Activated CD4-positive, alpha-beta T cell treated with anti-CD3 and anti-CD28 coated beads, Interleukin-2, amount 10 ng/mL, durations not matched to agents 24 days and 14 days (primary cell): ENCODE measurements at regions of chr11 and their contacts with region 1.

Region 1: GRCh38 chr11:64778508-64779346 is at the start of gene SF1:
- DNase-seq: peak; percentile 100
- H3K4me3 Mint-ChIP-seq: peak within 1 kb of the TSS; percentile 94
- H3K27ac Mint-ChIP-seq: peak within 1 kb of the TSS; percentile 98
- H3K4me1 Mint-ChIP-seq: peaks cover 49% of the 10 kb centered on the region
- H3K27me3 Mint-ChIP-seq: no peaks in the 10 kb centered on the region
- total RNA-seq, gene SF1: 522 and 525 TPM in 2 replicates

Region 2: GRCh38 chr11:64742889-64743590 is 35.7 kb before region 1 on chr11:
- intact Hi-C with region 1: loop called (anchors 2 kb)
- DNase-seq: peak; percentile 95
- H3K4me3 Mint-ChIP-seq: peak overlapping the region; percentile 94
- H3K27ac Mint-ChIP-seq: no peak overlapping the region
- H3K4me1 Mint-ChIP-seq: peaks cover 30% of the 10 kb centered on the region
- H3K27me3 Mint-ChIP-seq: no peaks in the 10 kb centered on the region

Region 3: DNA sequence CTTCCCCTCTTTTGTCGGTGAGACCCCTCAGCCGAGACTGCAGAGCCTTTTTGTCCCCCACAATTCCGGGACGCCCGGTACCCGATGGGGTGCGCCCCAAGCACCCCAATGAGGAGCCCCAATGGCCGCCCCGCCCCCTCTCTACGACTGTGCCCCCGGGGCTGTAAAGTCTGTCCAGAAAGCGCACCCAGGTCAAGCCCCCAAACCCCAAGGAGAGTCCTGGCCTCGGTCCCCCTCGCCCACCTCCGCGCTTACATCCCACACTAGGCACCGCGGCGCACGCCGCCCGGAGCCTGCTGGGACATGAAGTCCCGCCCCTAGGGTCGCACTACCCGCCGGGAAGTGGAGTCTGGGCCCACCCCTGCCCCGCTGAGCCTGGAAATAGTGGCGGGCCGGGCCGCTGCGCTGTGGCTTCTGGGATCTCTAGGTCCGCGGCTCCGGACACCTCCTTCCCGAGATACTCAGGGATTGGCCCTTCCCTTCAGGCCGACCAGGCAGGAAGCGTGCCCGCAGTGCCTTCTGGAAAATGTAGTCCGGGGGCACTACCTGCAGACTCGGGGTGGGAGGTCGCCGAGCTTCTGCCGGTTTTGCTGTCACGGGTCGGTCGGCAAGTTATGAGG is 31.7 kb after region 1 on chr11 and contains the start of gene MEN1:
- intact Hi-C with region 1: loop called (anchors 2 kb)
- DNase-seq: peak; percentile 94
- H3K4me3 Mint-ChIP-seq: peak within 1 kb of the TSS; percentile 98
- H3K27ac Mint-ChIP-seq: peak within 1 kb of the TSS; percentile 95
- H3K4me1 Mint-ChIP-seq: peaks cover 18% of the 10 kb centered on the region
- H3K27me3 Mint-ChIP-seq: no peaks in the 10 kb centered on the region
- total RNA-seq, gene MEN1: 36.7 and 39.1 TPM in 2 replicates

Region 4: GRCh38 chr11:65111744-65112414 is 333.2 kb after region 1 on chr11 and contains the start of gene TM7SF2:
- intact Hi-C with region 1: loop called (anchors 5 kb)
- DNase-seq: peak; percentile 98
- H3K4me3 Mint-ChIP-seq: peak within 1 kb of the TSS; percentile 98
- H3K27ac Mint-ChIP-seq: peak within 1 kb of the TSS; percentile 93
- H3K4me1 Mint-ChIP-seq: peaks cover 25% of the 10 kb centered on the region
- H3K27me3 Mint-ChIP-seq: no peaks in the 10 kb centered on the region
- total RNA-seq, gene TM7SF2: 28.2 and 28.9 TPM in 2 replicates